IMR-90 (cell line): ENCODE measurements at regions of chr12 and their contacts with region 1.

Region 1: GRCh38 chr12:3236345-3237187 is 159.4 kb downstream of the TSPAN9 start:
- DNase-seq: peak; percentile 72
- ATAC-seq: peak; percentile 92
- H3K4me3 ChIP-seq: no peak overlapping the region
- H3K27ac ChIP-seq: peak overlapping the region; percentile 48
- H3K4me1 ChIP-seq: peaks cover 11% of the 10 kb centered on the region; the same call in 1 of the 2 replicates
- H3K27me3 ChIP-seq: no peaks in the 10 kb centered on the region
- CTCF ChIP-seq: no peak
- POLR2A ChIP-seq: no peak
- RAD21 ChIP-seq: no peak

Region 2: GRCh38 chr12:3251691-3252090 is 15.1 kb after region 1 on chr12:
- CTCF ChIA-PET with region 1: no interaction called
- POLR2A ChIA-PET with region 1: no interaction called
- dilution Hi-C with region 1: no loop called
- in situ Hi-C with region 1: no loop called
- intact Hi-C with region 1: loop called (anchors 1 kb)
- DNase-seq: no peak
- ATAC-seq: no peak
- H3K4me3 ChIP-seq: no peak overlapping the region
- H3K27ac ChIP-seq: no peak overlapping the region
- H3K4me1 ChIP-seq: peaks cover 5% of the 10 kb centered on the region; the same call in 1 of the 2 replicates
- H3K27me3 ChIP-seq: no peaks in the 10 kb centered on the region
- CTCF ChIP-seq: no peak
- POLR2A ChIP-seq: no peak
- RAD21 ChIP-seq: no peak